Activated naive CD4-positive, alpha-beta T cell treated with anti-CD3 and anti-CD28 coated beads for 36 hours (primary cell): ENCODE measurements at regions of chr9 and their contacts with region 1.

Region 1: DNA sequence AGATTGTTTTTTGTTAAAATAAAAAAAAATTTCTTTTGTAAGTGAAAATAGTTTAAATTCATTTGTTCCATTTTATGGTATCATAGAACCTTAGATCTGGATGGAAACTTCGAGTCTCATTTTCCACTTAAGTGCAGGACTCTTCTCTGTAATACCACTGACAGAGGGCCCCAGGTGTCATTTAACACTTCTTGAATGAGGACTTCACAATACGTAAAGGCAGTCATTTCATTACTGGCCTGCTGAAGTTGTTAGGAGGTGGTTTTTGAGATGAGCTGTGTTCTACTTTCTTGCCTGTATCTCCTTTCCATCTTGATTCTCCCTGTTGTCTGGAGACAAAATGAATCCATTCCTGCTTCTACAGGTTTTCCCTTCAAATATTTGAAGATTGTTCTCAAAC is 455.3 kb downstream of the DMRT2 start:
- DNase-seq: peak; percentile 8
- H3K4me3 Mint-ChIP-seq: no peak overlapping the region
- H3K27ac Mint-ChIP-seq: no peak overlapping the region
- H3K4me1 Mint-ChIP-seq: peaks cover 7% of the 10 kb centered on the region
- H3K27me3 Mint-ChIP-seq: peaks cover 11% of the 10 kb centered on the region

Region 2: DNA sequence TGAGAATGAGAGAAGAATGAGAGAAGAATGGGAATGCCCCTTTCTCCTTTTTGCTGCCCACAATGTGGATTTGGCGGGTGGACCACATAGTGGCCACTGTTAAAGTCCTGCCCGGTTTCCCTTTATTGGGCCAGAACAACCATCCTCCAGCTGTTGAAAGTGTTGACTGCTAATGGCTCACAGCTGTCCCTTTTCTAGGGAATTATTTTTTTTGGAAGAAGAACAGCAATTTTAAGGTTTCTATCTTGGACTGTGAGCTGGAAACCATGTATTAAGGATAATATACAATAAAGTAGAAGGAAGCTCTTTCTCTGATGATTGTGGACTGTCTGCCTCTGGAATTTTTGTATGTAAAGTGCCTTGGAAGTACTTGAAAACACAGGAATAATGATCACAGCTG is 269.4 kb before region 1 on chr9:
- CTCF ChIA-PET with region 1: no interaction called
- intact Hi-C with region 1: no loop called
- DNase-seq: no peak
- H3K4me3 Mint-ChIP-seq: no peak overlapping the region
- H3K27ac Mint-ChIP-seq: no peak overlapping the region
- H3K4me1 Mint-ChIP-seq: no peaks in the 10 kb centered on the region
- H3K27me3 Mint-ChIP-seq: peaks cover 2% of the 10 kb centered on the region

Region 3: GRCh38 chr9:1470001-1470804 is 35.3 kb before region 1 on chr9:
- CTCF ChIA-PET with region 1: no interaction called
- intact Hi-C with region 1: loop called (anchors 2 kb)
- DNase-seq: no peak
- H3K4me3 Mint-ChIP-seq: no peak overlapping the region
- H3K27ac Mint-ChIP-seq: no peak overlapping the region
- H3K4me1 Mint-ChIP-seq: peaks cover 4% of the 10 kb centered on the region
- H3K27me3 Mint-ChIP-seq: peaks cover 8% of the 10 kb centered on the region